Lower leg skin (tissue), 4 donors: ENCODE measurements at regions of chr6 and their contacts with region 1.

Region 1: GRCh38 chr6:129843573-129843972 is 17.5 kb downstream of the TMEM244 start:
- DNase-seq: no peak
- H3K4me3 ChIP-seq: no peak overlapping the region
- CTCF ChIP-seq: no peak
- POLR2A ChIP-seq: no peak

Region 2: DNA sequence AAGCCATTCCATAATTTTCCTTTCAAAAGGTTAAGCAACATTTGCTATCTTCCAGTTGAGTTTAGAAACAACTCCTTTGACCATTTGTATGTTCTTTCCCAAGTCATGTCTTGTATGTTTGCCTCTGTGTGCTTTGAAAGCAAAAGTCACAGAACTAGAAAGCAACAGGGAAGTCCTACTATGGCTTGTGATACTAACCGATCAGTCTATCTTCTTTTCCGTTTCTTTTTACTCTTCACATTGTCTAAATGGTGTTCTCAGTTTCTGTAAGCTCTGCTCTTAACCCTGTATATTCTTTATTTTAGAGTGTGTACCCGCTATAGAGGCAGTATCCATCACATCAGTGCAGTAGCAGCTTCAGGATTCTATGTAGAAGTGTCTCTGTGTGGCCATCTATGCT is 15.3 kb before region 1 on chr6:
- intact Hi-C with region 1: loop called (anchors 2 kb)
- DNase-seq: no peak
- H3K4me3 ChIP-seq: no peak overlapping the region
- CTCF ChIP-seq: no peak
- POLR2A ChIP-seq: no peak